ENCODE measurements at regions of chr15 and their contacts with region 1.

Region 1: GRCh38 chr15:55407949-55408791 is at the starts of genes CCPG1 and PIERCE2:
- DNase-seq: peak; percentile 80
- ATAC-seq: peak; percentile 97
- H3K4me3 ChIP-seq: peak within 1 kb of the TSS; percentile 84 to 86
- H3K27ac ChIP-seq: peak within 1 kb of the TSS; percentile 78
- H3K4me1 ChIP-seq: peaks cover 10% of the 10 kb centered on the region; the same call in 1 of the 2 replicates
- H3K27me3 ChIP-seq: no peaks in the 10 kb centered on the region
- CTCF ChIP-seq: peak; percentile 73
- total RNA-seq, gene CCPG1: 27.6 TPM
- total RNA-seq, gene PIERCE2: 2.8 TPM

Region 2: GRCh38 chr15:55222588-55222987 is 185.6 kb before region 1 on chr15:
- CTCF ChIA-PET with region 1: no interaction called
- POLR2A ChIA-PET with region 1: no interaction called
- in situ Hi-C with region 1: no loop called
- intact Hi-C with region 1: no loop called
- DNase-seq: no peak
- ATAC-seq: no peak
- H3K4me3 ChIP-seq: no peak overlapping the region
- H3K27ac ChIP-seq: no peak overlapping the region
- H3K4me1 ChIP-seq: no peaks in the 10 kb centered on the region
- H3K27me3 ChIP-seq: no peaks in the 10 kb centered on the region
- CTCF ChIP-seq: no peak

Region 3: DNA sequence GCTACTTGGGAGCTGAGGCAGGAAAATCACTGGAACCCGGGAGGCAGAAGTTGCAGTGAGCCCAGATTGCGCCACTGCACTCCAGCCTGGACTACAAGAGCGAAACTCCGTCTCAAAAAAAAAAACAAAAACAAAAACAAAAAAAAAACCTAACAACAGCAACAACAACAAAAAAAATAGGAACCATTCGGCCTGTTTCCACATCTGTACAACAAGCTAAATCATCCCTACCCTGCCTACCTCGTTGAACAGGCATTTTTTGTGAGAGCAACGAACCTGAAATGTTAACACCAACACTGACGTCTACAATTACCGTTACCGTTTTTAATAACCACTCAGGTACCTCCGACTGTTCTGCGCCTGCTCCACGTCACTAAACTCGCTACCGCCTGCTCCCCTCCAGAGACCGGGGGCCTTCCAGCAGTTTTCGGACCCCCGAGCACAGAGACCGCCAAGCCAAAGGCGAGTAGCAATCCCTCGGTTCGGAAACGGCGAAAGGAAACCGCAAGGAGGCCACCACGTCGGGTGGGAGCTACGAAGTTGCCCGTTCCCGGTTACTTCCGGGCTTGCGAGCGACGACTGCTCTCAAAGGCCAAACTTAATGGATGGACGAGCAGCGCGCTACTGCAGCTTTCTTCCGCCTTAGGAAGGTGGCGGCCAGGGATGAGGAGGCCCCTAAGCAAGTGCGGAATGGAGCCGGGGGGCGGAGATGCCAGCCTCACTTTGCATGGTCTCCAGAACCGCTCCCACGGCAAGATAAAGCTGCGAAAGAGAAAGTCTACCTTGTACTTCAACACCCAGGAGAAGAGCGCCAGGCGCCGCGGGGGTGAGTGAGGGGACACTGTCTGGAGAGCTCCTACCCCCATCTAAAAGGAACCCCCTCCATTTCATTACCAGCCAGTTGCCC is 89.3 kb before region 1 on chr15 and contains the starts of genes PIGB and PIGBOS1:
- CTCF ChIA-PET with region 1: interaction called, 7 read pairs
- POLR2A ChIA-PET with region 1: interaction called, 3 read pairs
- in situ Hi-C with region 1: no loop called
- intact Hi-C with region 1: loop called (anchors 10 kb)
- DNase-seq: peak; percentile 77
- ATAC-seq: peak; percentile 98
- H3K4me3 ChIP-seq: peak within 1 kb of the TSS; percentile 86 to 87
- H3K27ac ChIP-seq: peak within 1 kb of the TSS; percentile 99
- H3K4me1 ChIP-seq: peaks cover 14% of the 10 kb centered on the region; the same call in 1 of the 2 replicates
- H3K27me3 ChIP-seq: no peaks in the 10 kb centered on the region
- CTCF ChIP-seq: no peak
- total RNA-seq, gene PIGB: 19.3 TPM
- total RNA-seq, gene PIGBOS1: 13.4 TPM

Region 4: GRCh38 chr15:55422089-55422488 is 13.9 kb after region 1 on chr15:
- CTCF ChIA-PET with region 1: no interaction called
- POLR2A ChIA-PET with region 1: no interaction called
- in situ Hi-C with region 1: no loop called
- intact Hi-C with region 1: no loop called
- DNase-seq: no peak
- ATAC-seq: no peak
- H3K4me3 ChIP-seq: no peak overlapping the region
- H3K27ac ChIP-seq: no peak overlapping the region
- H3K4me1 ChIP-seq: no peaks in the 10 kb centered on the region
- H3K27me3 ChIP-seq: no peaks in the 10 kb centered on the region
- CTCF ChIP-seq: no peak

Region 5: DNA sequence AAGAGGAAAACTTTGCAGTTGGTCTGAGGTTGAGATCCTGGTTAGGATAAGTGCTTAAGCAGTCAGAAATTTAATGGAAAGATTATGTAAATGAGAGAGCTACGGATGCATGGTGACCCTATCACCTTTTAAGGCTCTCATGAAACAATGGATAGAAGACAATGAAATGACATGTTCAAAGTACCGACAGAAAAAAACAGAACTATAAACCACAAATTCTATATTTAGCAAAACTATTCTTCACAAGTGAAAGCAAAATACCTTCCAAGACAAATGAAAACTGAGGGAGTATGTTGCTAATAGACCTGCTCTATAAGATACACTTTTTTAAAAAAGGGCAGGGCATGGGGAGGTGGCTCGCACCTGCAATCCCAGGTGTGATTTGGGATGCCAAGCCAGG is 67.7 kb after region 1 on chr15:
- CTCF ChIA-PET with region 1: no interaction called
- POLR2A ChIA-PET with region 1: no interaction called
- in situ Hi-C with region 1: no loop called
- intact Hi-C with region 1: loop called (anchors 10 kb)
- DNase-seq: no peak
- ATAC-seq: no peak
- H3K4me3 ChIP-seq: no peak overlapping the region
- H3K27ac ChIP-seq: no peak overlapping the region
- H3K4me1 ChIP-seq: no peaks in the 10 kb centered on the region
- H3K27me3 ChIP-seq: no peaks in the 10 kb centered on the region
- CTCF ChIP-seq: no peak

Region 6: DNA sequence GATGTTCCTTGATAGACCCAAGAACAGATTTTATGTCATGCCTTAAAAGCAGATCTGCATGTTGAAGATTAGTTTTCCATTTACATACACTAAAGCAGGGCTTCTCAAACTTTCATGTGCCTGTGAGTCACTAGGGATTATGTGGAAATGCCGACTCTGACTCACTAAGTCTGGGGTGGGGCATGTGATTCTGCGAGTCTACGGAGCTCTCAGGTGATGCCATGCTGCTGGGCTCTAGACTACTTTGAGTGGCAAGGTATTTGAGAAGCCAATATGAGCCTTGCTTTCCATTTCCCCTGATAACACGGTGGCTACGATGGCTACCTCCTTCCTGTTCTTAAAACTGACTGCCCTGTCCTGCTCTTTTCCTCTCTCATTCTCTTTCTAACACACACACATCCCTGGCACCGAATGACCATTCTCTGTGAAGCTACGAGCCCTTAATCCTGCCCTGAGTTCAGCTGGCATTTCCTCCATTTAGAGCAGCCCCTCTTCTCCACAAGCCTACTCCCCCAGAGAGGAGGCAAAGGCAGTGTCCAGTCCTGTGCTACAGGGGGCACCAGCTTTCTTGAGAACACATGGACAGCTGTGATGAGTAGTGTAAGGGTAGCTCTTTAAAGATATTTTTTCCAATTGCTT is 219.7 kb after region 1 on chr15:
- CTCF ChIA-PET with region 1: no interaction called
- POLR2A ChIA-PET with region 1: no interaction called
- in situ Hi-C with region 1: no loop called
- intact Hi-C with region 1: no loop called
- DNase-seq: peak; percentile 94
- ATAC-seq: peak; percentile 98
- H3K4me3 ChIP-seq: peak overlapping the region in 1 of 2 experiments; percentile 29; a peak in 2 of 4 replicates
- H3K27ac ChIP-seq: peak overlapping the region; percentile 29; the same call in 1 of the 2 replicates
- H3K4me1 ChIP-seq: peaks cover 3% of the 10 kb centered on the region; the same call in 1 of the 2 replicates
- H3K27me3 ChIP-seq: no peaks in the 10 kb centered on the region
- CTCF ChIP-seq: no peak

Region 7: DNA sequence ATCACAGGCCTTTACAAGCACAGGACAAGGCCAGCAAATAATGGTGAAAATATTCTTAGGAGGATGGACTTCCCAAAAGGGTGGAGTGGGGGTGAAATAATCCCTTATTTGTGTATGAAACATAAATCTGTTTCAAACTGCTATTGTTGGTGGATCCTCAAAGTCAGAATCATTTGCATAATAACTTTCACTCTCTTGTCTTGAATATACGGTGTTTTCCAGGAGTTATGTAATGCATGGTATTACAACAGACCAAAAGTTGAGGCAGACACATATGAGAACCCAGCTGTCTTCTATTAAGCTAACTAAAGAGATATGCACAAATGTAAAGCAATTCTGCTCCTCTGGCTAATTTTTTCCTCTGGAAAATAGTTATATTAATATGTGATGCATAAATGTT is 277.1 kb after region 1 on chr15:
- CTCF ChIA-PET with region 1: no interaction called
- POLR2A ChIA-PET with region 1: no interaction called
- in situ Hi-C with region 1: no loop called
- intact Hi-C with region 1: no loop called
- DNase-seq: no peak
- ATAC-seq: no peak
- H3K4me3 ChIP-seq: no peak overlapping the region
- H3K27ac ChIP-seq: no peak overlapping the region
- H3K4me1 ChIP-seq: no peaks in the 10 kb centered on the region
- H3K27me3 ChIP-seq: no peaks in the 10 kb centered on the region
- CTCF ChIP-seq: no peak